ENCODE measurements at regions of chr6 and their contacts with region 1.

Region 1: DNA sequence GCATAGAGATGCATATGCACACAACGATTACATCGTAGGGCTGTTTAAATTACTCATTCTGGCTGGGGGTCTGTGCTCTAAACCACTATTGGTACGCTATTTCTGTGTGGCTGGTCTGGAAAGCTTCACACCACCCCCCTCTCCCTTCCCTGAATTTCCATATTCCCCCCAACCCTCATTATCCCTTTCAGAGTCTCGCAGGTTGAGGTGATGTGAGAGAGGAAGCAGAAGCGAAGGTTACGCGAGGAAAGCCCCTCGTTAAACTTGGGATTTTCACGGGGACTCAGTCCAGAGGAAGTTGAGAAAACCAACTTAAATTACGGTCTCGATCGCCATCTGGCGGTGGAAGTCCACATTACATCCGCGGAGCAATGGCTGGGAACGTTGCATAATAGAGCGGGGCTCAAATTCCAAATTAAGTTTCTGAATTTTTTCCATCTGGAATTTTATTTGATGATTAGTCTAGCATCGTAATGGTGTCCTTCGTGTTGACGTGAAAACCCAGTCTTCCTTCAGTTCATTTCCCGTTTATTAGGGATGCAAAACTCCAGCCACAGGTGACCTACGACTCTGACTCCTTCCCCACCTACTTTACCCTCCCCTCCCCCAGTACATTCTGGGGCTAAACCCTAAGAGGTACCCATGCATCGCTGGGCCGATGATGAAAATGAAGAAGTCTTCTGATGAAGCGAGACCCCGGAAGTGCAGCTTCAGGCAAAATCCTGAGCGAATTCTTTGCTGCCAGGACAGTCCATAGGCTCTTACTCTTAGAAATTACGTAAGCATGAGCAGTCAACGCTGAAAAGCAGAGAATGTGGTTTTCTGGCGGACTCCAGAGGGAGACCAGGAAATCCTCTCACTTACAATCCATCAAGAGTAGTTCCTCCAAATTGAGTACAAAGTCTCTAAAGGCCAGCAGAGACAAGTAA is 19.7 kb downstream of the HLA-DOB start:
- DNase-seq: peak; percentile 60 to 88 (median 81)
- ATAC-seq: peak; percentile 79
- H3K4me3 ChIP-seq: peak overlapping the region in 1 of 2 experiments; percentile 33
- H3K4me3 Mint-ChIP-seq: peak overlapping the region; percentile 64
- H3K27ac ChIP-seq: no peak overlapping the region
- H3K27ac Mint-ChIP-seq: no peak overlapping the region
- H3K4me1 ChIP-seq: peaks cover 17% of the 10 kb centered on the region
- H3K4me1 Mint-ChIP-seq: peaks cover 27% of the 10 kb centered on the region
- H3K27me3 ChIP-seq: peaks cover 0 to 6% of the 10 kb centered on the region in 2 experiments
- H3K27me3 Mint-ChIP-seq: peaks cover 36% of the 10 kb centered on the region
- CTCF ChIP-seq: peak; percentile 97

Region 2: GRCh38 chr6:32087574-32088486 is 709.3 kb before region 1 on chr6:
- CTCF ChIA-PET with region 1: no interaction called
- POLR2A ChIA-PET with region 1: no interaction called
- intact Hi-C with region 1: loop called in 1 of 2 experiments (anchors 5 kb)
- DNase-seq: peak; percentile 43 to 82 (median 72)
- ATAC-seq: peak; percentile 94
- H3K4me3 ChIP-seq: no peak overlapping the region
- H3K4me3 Mint-ChIP-seq: no peak overlapping the region
- H3K27ac ChIP-seq: no peak overlapping the region
- H3K27ac Mint-ChIP-seq: no peak overlapping the region
- H3K4me1 ChIP-seq: no peaks in the 10 kb centered on the region
- H3K4me1 Mint-ChIP-seq: no peaks in the 10 kb centered on the region
- H3K27me3 ChIP-seq: peaks cover 4 to 10% of the 10 kb centered on the region in 2 experiments
- H3K27me3 Mint-ChIP-seq: peaks cover 24% of the 10 kb centered on the region
- CTCF ChIP-seq: peak; percentile 34

Region 3: GRCh38 chr6:32432050-32432450 is 365.1 kb before region 1 on chr6:
- CTCF ChIA-PET with region 1: interaction called, 10 read pairs
- POLR2A ChIA-PET with region 1: no interaction called
- intact Hi-C with region 1: loop called (anchors 5 kb)
- DNase-seq: peak in 2 of 9 experiments; percentile 52 to 65
- ATAC-seq: peak; percentile 36
- H3K4me3 ChIP-seq: no peak overlapping the region
- H3K4me3 Mint-ChIP-seq: no peak overlapping the region
- H3K27ac ChIP-seq: no peak overlapping the region
- H3K27ac Mint-ChIP-seq: no peak overlapping the region
- H3K4me1 ChIP-seq: no peaks in the 10 kb centered on the region
- H3K4me1 Mint-ChIP-seq: no peaks in the 10 kb centered on the region
- H3K27me3 ChIP-seq: no peaks in the 10 kb centered on the region
- H3K27me3 Mint-ChIP-seq: peaks cover 13% of the 10 kb centered on the region
- CTCF ChIP-seq: peak; percentile 63

Region 4: GRCh38 chr6:32700391-32701040 is 96.6 kb before region 1 on chr6:
- CTCF ChIA-PET with region 1: interaction called, 7 read pairs
- POLR2A ChIA-PET with region 1: no interaction called
- intact Hi-C with region 1: loop called (anchors 1 to 5 kb)
- DNase-seq: peak in 6 of 9 experiments; percentile 2 to 71 (median 46)
- ATAC-seq: peak; percentile 49
- H3K4me3 ChIP-seq: no peak overlapping the region
- H3K4me3 Mint-ChIP-seq: no peak overlapping the region
- H3K27ac ChIP-seq: no peak overlapping the region
- H3K27ac Mint-ChIP-seq: no peak overlapping the region
- H3K4me1 ChIP-seq: no peaks in the 10 kb centered on the region
- H3K4me1 Mint-ChIP-seq: peaks cover 4% of the 10 kb centered on the region
- H3K27me3 ChIP-seq: no peaks in the 10 kb centered on the region
- H3K27me3 Mint-ChIP-seq: peaks cover 40% of the 10 kb centered on the region
- CTCF ChIP-seq: peak; percentile 86